Activated T-helper 2 cell treated with anti-CD3 and anti-CD28 coated beads, Interferon-gamma antibody, Interleukin-2, Interleukin-4, amounts not matched to agents 10 μg/mL and 5 μg/mL and 100 μg/mL, durations not matched to agents 14 hours and 24 hours and 36 hours (primary cell): ENCODE measurements at regions of chr6 and their contacts with region 1.

Region 1: DNA sequence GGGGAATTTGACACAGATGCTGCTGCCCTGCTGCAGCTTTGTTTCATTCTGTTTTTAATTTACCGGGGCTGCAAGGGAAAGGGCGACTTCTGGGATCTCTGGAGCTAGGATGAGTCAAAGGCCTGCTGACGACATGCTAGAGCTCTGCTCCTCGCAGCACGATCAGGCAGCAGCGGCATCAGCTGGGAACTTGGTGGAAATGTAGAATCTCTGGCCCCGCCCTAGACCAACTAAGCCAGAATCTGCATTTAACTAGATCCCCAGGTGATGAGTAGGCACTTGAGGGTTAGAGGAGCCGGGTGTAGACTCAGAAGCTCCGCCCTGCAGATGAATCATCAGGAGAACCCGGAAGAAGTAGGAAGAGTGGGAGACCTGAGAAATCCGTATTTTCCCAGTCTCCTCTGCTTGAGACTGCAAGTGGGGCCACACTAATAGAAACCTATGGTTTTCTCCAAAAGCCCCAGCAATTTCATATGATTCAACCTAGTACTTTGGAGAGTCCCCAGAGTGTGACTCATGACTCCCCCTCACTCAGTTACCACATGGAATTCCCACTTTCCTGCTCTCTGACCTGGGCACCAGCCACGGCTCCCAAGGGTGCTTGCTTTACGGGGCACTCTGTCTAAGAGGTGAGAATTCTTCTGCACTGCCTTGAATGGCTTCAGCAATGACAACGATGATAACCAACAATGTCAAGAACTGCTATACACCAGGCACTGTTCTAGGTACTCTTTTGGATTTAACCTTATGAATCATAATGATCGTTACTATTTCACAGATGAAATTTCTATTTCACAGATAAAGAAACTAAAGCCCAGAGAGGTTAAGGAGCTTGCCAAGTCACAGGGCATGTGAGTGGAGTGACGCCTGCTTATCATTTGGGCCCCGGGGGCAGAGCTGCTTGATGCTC is 18.1 kb downstream of the TUBB2B start:
- DNase-seq: no peak
- H3K4me3 Mint-ChIP-seq: peak overlapping the region; percentile 60
- H3K27ac Mint-ChIP-seq: peak overlapping the region; percentile 89
- H3K4me1 Mint-ChIP-seq: peaks cover 26% of the 10 kb centered on the region
- H3K27me3 Mint-ChIP-seq: peaks cover 29% of the 10 kb centered on the region

Region 2: GRCh38 chr6:3118353-3119039 is 90.9 kb before region 1 on chr6 and contains the start of gene BPHL:
- intact Hi-C with region 1: loop called (anchors 2 kb)
- DNase-seq: peak; percentile 98
- H3K4me3 Mint-ChIP-seq: peak within 1 kb of the TSS; percentile 80
- H3K27ac Mint-ChIP-seq: peak within 1 kb of the TSS; percentile 81
- H3K4me1 Mint-ChIP-seq: peaks cover 16% of the 10 kb centered on the region
- H3K27me3 Mint-ChIP-seq: no peaks in the 10 kb centered on the region
- total RNA-seq, gene BPHL: 12.1 and 15.8 TPM in 2 replicates

Region 3: DNA sequence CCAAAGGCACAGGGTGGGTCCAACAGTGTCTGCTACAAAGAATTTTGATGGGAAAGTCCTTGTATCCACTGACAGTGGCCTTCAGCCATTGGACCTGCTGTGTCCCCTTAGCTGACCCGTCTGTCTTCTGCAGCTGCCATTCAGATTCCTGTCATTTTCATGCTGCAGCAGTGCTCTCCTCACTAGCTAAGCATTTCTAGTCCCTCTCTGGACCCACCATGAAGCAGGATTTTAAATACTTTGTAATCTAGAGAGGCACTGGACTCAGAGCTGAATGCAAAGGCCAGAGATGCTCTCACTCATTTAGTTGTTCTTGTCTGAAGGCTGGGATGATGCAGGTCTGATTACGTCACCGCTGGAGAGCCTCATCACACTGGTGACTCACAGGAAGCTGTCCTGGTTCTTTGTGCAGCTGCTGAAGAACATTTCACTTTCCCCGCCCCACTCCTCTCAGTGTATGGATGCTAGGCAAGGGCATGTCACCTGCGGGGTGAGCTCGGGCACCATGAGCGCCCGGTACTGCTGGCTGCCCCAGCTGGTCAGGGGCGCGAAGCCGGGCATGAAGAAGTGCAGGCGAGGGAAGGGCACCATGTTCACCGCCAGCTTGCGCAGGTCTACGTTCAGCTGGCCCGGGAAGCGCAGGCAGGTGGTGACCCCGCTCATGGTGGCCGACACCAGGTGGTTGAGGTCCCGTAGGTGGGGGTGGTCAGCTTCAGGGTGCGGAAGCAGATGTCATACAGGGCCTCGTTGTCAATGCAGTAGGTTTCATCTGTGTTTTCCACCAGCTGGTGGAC is 32.6 kb before region 1 on chr6:
- intact Hi-C with region 1: no loop called
- DNase-seq: no peak
- H3K4me3 Mint-ChIP-seq: no peak overlapping the region
- H3K27ac Mint-ChIP-seq: no peak overlapping the region
- H3K4me1 Mint-ChIP-seq: peaks cover 4% of the 10 kb centered on the region
- H3K27me3 Mint-ChIP-seq: peaks cover 20% of the 10 kb centered on the region

Region 4: DNA sequence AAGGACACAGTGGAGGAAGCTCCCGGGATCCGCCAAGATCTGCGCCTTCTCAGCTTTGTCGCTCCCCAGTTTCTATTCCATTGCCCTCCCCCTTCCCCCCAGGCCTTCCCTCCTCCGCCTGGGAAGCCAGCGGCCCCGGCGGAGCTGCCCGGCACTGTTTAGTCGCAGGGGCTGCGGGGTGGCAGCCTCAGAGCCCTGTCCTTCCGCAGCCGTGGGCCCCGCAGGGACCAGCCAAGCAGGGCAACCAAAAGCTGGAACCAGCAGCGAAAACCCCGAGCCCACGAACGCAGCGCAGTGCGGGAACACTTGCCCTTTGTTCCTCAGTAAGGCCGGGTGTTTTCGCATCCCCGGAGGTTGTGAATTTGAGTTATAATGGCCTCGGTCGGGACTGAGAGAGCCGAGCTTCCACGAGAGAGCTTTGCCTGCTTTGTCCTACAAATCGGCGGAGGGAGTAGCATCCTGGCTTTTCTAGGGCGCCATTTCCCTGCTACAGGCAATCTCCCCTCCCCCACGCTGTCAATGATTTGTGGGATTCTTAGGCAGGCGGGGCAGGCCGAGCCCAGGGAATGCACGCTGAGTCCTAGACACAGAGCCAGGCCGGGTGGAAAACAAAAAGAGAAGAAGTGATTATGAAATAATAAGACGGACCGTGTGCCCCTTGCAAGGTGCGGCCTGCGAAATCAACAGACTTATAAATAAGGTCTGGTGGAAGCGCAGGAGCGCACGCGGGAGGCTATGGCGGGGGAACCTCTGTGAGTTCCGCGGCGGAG is 22.1 kb after region 1 on chr6:
- intact Hi-C with region 1: no loop called
- DNase-seq: no peak
- H3K4me3 Mint-ChIP-seq: no peak overlapping the region
- H3K27ac Mint-ChIP-seq: no peak overlapping the region
- H3K4me1 Mint-ChIP-seq: peaks cover 28% of the 10 kb centered on the region
- H3K27me3 Mint-ChIP-seq: peaks cover 81% of the 10 kb centered on the region

Region 5: GRCh38 chr6:3251462-3252314 is 42.3 kb after region 1 on chr6:
- intact Hi-C with region 1: loop called (anchors 5 kb)
- DNase-seq: peak; percentile 76
- H3K4me3 Mint-ChIP-seq: no peak overlapping the region
- H3K27ac Mint-ChIP-seq: no peak overlapping the region
- H3K4me1 Mint-ChIP-seq: peaks cover 10% of the 10 kb centered on the region
- H3K27me3 Mint-ChIP-seq: peaks cover 49% of the 10 kb centered on the region